ENCODE measurements at regions of chr16 and their contacts with region 1.

Region 1: GRCh38 chr16:48609652-48610029 is 339 bp downstream of the N4BP1 start:
- DNase-seq: peak; percentile 40
- H3K4me3 Mint-ChIP-seq: peak overlapping the region; percentile 85
- H3K27ac Mint-ChIP-seq: peak overlapping the region; percentile 89
- H3K4me1 Mint-ChIP-seq: peaks cover 37% of the 10 kb centered on the region
- H3K27me3 Mint-ChIP-seq: no peaks in the 10 kb centered on the region

Region 2: GRCh38 chr16:46689365-46690280 is 1920.0 kb before region 1 on chr16 and contains the start of gene ORC6:
- CTCF ChIA-PET with region 1: no interaction called
- intact Hi-C with region 1: loop called (anchors 2 kb)
- DNase-seq: peak; percentile 98
- H3K4me3 Mint-ChIP-seq: no peak within 1 kb of the TSS
- H3K27ac Mint-ChIP-seq: peak within 1 kb of the TSS; percentile 64
- H3K4me1 Mint-ChIP-seq: peaks cover 47% of the 10 kb centered on the region
- H3K27me3 Mint-ChIP-seq: no peaks in the 10 kb centered on the region
- total RNA-seq, gene ORC6: 57.7 to 61.9 TPM

Region 3: DNA sequence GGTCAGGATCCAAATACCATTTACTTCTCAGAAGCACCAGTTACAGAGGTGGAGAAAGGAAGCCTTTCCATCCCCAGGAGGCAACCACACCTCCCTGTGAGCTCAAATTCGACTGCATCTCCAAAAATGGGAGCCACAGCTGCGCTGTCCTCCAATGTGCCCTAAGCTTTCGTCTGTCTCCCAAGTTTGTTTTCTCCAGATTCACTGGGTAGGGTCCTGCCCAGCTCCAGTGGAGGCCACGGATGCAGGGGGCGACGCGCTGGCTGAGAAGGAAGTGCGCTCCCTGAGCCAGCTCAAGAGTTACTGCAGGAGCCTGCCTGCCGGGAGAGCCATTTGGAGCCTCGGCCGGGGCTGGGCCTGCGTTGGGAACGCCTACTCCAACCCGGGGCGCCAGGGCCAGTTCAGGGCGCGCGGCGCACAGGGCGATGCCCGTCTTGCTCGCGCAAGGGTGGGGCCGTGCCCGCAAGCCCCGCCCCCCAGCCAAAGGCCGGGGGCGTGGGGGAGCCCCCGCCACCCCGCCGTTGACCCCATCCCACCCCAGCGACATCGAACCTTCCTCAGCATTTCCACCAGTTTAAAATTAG is 244.0 kb before region 1 on chr16:
- CTCF ChIA-PET with region 1: no interaction called
- intact Hi-C with region 1: loop called (anchors 1 kb)
- DNase-seq: peak; percentile 88
- H3K4me3 Mint-ChIP-seq: peak overlapping the region; percentile 99
- H3K27ac Mint-ChIP-seq: peak overlapping the region; percentile 100
- H3K4me1 Mint-ChIP-seq: peaks cover 65% of the 10 kb centered on the region
- H3K27me3 Mint-ChIP-seq: no peaks in the 10 kb centered on the region

Region 4: GRCh38 chr16:48556913-48557351 is 52.7 kb before region 1 on chr16:
- CTCF ChIA-PET with region 1: no interaction called
- intact Hi-C with region 1: loop called (anchors 1 kb)
- DNase-seq: peak; percentile 43
- H3K4me3 Mint-ChIP-seq: no peak overlapping the region
- H3K27ac Mint-ChIP-seq: peak overlapping the region; percentile 58
- H3K4me1 Mint-ChIP-seq: peaks cover 80% of the 10 kb centered on the region
- H3K27me3 Mint-ChIP-seq: no peaks in the 10 kb centered on the region

Region 5: GRCh38 chr16:48596326-48596725 is 13.3 kb before region 1 on chr16:
- CTCF ChIA-PET with region 1: no interaction called
- intact Hi-C with region 1: loop called (anchors 1 kb)
- DNase-seq: peak; percentile 71
- H3K4me3 Mint-ChIP-seq: no peak overlapping the region
- H3K27ac Mint-ChIP-seq: peak overlapping the region; percentile 79
- H3K4me1 Mint-ChIP-seq: peaks cover 51% of the 10 kb centered on the region
- H3K27me3 Mint-ChIP-seq: no peaks in the 10 kb centered on the region

Region 6: DNA sequence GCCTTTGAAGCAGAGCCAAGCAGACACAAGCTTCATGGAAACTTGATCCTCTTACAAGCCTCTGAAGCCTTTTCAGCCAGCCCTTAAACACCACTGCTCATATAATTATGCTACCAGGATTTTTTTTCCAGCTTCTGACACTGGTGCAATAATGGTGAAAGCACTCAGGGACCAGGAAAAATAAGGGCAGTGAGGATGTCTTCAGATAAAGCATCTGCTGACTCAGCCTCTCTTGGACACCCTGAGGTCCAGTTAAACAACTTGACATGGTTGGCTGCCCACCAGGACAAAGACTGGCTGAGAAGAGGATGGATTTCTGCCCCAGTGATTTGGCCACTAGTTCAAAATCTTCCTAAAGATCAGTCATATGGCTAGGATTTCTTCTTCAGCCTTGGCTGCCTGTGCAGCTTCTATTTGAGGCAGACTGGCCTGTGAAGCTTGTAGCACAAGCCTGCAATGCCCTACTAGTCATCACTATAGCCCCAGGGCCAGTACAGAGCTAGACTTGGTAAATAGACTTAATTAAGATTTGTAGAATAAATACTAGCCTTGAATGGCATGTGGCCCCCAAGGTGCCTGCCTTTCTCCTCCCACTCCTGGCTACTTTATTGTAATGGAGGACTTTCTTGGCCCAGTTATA is 124.7 kb after region 1 on chr16:
- CTCF ChIA-PET with region 1: no interaction called
- intact Hi-C with region 1: no loop called
- DNase-seq: no peak
- H3K4me3 Mint-ChIP-seq: no peak overlapping the region
- H3K27ac Mint-ChIP-seq: no peak overlapping the region
- H3K4me1 Mint-ChIP-seq: no peaks in the 10 kb centered on the region
- H3K27me3 Mint-ChIP-seq: no peaks in the 10 kb centered on the region

Region 7: DNA sequence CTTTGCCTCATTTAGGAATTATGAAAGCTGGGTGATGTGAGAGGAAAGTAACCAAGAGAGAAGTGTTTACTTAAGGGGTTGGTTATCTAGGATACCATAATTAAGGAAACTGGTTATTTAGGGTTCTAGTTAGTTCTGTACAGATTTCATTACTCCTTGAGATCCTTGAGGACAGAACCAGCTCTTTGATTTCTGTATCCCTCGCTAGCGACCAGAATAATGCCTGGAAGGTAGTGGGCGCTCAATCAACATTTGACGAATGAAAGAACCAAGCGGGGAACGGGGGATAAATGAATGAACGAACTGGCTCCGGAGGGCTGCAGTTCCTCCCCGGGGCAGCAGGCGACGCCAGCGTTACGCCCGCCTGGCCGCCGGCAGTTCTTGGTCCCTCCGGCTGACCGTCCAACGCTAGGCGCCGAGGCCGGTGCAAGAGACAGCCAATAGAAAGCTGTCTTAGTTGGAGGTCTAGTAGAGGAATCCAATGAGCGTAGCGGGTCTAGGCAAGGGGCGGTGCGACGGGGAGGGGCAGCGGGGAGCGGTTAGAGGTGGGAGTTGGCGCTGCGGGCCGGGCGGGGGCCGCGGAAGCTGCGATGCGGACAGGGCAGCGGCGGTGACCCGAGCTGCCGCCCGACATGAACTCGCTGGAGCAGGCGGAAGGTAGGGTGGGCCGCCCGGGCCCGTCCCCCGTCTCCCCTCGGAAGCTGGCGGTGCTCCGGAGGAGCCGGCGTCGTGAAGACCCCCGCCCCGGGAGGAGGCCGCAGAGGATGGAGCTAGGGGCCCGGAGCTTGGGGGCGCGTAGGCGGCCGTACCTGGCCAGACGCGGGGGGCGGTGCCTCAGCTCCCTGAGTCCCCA is 1415.3 kb after region 1 on chr16 and contains the start of gene CNEP1R1:
- CTCF ChIA-PET with region 1: no interaction called
- intact Hi-C with region 1: loop called (anchors 10 kb)
- DNase-seq: peak; percentile 94
- H3K4me3 Mint-ChIP-seq: peak within 1 kb of the TSS; percentile 91
- H3K27ac Mint-ChIP-seq: peak within 1 kb of the TSS; percentile 82
- H3K4me1 Mint-ChIP-seq: peaks cover 22% of the 10 kb centered on the region
- H3K27me3 Mint-ChIP-seq: no peaks in the 10 kb centered on the region
- total RNA-seq, gene CNEP1R1: 28.2 to 30.9 TPM